MCF 10A (cell line): ENCODE measurements at regions of chr1 and their contacts with region 1.

Region 1: GRCh38 chr1:209490013-209490412 is 93.5 kb upstream of the CAMK1G start:
- DNase-seq: peak; percentile 69
- H3K4me3 Mint-ChIP-seq: no peak overlapping the region
- H3K27ac Mint-ChIP-seq: no peak overlapping the region
- H3K4me1 Mint-ChIP-seq: peaks cover 26% of the 10 kb centered on the region
- H3K27me3 Mint-ChIP-seq: no peaks in the 10 kb centered on the region
- CTCF ChIP-seq: peak; percentile 90

Region 2: DNA sequence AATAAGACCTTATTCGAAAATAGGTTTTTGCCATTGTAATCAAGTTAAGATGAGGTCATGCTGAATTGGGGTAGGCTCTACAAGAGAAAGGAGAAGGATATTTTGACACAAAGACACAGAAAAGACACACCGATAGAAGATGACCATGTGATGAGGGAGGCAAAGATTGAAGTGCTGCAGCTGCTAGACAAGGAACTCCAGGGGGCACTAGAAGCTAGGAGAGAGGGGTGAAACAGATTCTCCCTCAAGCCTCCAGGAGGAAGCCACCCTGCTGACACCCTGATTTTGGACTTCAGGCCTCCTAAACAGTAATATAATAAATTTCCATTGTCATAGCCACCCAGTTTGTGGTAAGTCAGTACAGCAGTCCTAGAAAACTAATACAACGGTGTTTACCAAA is 413.3 kb before region 1 on chr1:
- CTCF ChIA-PET with region 1: interaction called, 3 read pairs
- POLR2A ChIA-PET with region 1: no interaction called
- intact Hi-C with region 1: loop called (anchors 1 kb)
- DNase-seq: peak; percentile 84
- H3K4me3 Mint-ChIP-seq: no peak overlapping the region
- H3K27ac Mint-ChIP-seq: no peak overlapping the region
- H3K4me1 Mint-ChIP-seq: peaks cover 15% of the 10 kb centered on the region
- H3K27me3 Mint-ChIP-seq: no peaks in the 10 kb centered on the region
- CTCF ChIP-seq: peak; percentile 68

Region 3: DNA sequence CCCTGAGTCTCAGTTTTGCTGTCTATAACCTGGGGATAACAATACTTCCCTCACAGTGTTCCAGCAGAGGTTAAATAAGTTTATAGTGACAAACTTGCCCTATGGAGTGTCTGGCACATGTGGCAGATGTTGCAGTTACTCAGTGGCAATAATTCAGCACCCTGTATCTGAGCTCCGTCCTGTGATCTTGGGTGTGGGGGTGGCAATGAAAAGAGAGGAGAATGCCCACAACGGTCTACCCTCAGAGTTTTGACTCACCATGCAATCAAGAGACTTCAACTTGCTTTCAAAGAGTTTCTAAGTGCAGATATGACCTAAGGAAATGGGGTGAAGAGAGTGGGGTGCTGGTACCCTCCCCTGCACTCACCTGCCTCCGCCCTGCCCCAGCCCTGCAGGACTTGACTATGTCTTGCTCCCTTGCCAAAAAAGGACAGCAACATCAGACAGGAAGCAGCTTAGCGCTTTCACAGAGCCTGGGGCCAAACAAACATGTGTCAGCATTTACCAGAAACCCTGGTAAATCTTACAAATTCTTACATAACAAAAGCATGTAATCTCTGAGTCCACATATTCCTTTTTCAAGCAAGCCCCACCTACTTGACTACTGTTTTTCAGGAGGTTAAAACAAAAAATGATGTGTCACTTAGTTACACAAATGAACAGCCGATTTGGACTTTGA is 91.6 kb before region 1 on chr1:
- CTCF ChIA-PET with region 1: interaction called, 10 read pairs
- POLR2A ChIA-PET with region 1: interaction called, 5 read pairs
- intact Hi-C with region 1: no loop called
- DNase-seq: peak; percentile 100
- H3K4me3 Mint-ChIP-seq: peak overlapping the region; percentile 29
- H3K27ac Mint-ChIP-seq: peak overlapping the region; percentile 79
- H3K4me1 Mint-ChIP-seq: peaks cover 28% of the 10 kb centered on the region
- H3K27me3 Mint-ChIP-seq: no peaks in the 10 kb centered on the region
- CTCF ChIP-seq: no peak

Region 4: DNA sequence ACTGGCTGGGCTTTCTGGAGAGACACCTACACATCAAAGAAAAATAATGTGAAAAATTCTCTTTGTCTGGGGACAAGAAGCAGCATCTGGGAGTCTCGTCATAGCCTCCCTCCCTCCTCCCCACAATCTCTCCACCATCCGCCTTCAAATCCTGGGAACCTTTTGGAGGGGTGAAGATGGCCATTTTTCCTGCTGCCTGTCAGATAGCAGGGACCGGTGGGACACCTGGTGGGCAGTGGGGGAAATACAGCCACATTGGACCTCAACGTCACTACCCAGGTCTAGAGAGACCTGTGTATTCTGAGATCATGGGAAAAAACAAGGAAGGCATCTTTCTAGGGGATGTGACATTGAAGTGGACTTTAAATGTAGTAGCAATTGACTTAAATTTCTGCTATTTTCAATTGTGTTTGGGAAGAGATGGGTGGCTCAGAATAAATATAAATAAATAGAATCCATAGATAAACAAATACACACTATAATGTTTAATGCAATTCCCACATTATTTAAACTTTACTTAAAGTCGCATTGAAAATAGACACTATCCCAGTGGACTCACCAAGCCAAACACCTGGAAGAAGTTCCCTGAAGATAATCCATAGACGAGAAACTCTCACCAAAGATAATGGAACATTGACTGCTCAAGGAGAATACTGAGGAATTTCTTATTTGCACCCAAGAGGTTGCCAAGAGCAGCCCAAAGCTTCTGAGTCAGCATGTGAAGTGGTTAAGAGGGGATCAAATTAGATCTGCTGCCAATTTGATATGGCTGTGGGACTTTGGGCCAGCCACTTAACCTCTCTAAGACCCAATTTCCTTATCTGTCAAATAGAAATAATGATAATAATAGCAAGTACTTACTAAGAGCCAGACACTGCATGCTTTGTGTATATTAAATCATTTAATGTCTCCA is 54.1 kb before region 1 on chr1:
- CTCF ChIA-PET with region 1: interaction called, 133 read pairs
- POLR2A ChIA-PET with region 1: interaction called, 391 read pairs
- intact Hi-C with region 1: loop called (anchors 1 kb)
- DNase-seq: peak; percentile 97
- H3K4me3 Mint-ChIP-seq: no peak overlapping the region
- H3K27ac Mint-ChIP-seq: peak overlapping the region; percentile 90
- H3K4me1 Mint-ChIP-seq: peaks cover 51% of the 10 kb centered on the region
- H3K27me3 Mint-ChIP-seq: no peaks in the 10 kb centered on the region
- CTCF ChIP-seq: peak; percentile 100

Region 5: GRCh38 chr1:209463441-209463840 is 26.6 kb before region 1 on chr1:
- CTCF ChIA-PET with region 1: interaction called, 169 read pairs
- POLR2A ChIA-PET with region 1: interaction called, 11 read pairs
- intact Hi-C with region 1: no loop called
- DNase-seq: no peak
- H3K4me3 Mint-ChIP-seq: no peak overlapping the region
- H3K27ac Mint-ChIP-seq: no peak overlapping the region
- H3K4me1 Mint-ChIP-seq: no peaks in the 10 kb centered on the region
- H3K27me3 Mint-ChIP-seq: peaks cover 2% of the 10 kb centered on the region
- CTCF ChIP-seq: no peak

Region 6: DNA sequence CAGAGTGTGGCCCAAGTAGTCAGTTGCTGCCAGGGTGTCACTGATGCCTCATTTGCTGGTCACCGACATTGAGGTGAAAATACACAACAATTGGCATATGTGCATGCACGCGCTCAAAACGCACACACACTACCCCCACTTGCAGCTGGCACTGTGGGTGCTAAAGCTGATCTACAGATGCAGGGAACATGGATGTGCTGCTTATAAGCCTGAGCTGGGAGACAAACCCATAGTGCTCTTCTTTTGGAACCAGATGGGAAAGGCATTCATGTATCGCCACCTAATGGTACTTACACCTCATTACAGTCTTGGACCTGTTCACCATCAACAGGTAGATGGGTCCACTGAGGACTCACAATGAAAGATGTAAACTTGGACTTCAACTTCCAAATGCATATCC is 23.2 kb after region 1 on chr1:
- CTCF ChIA-PET with region 1: interaction called, 206 read pairs
- POLR2A ChIA-PET with region 1: interaction called, 5 read pairs
- intact Hi-C with region 1: no loop called
- DNase-seq: peak; percentile 84
- H3K4me3 Mint-ChIP-seq: no peak overlapping the region
- H3K27ac Mint-ChIP-seq: no peak overlapping the region
- H3K4me1 Mint-ChIP-seq: peaks cover 11% of the 10 kb centered on the region
- H3K27me3 Mint-ChIP-seq: no peaks in the 10 kb centered on the region
- CTCF ChIP-seq: peak; percentile 93